ENCODE measurements at regions of chr22 and their contacts with region 1.

Region 1: GRCh38 chr22:39554151-39554550 is 16.4 kb upstream of the CACNA1I start:
- DNase-seq: no peak

Region 2: GRCh38 chr22:39532215-39533071 is 21.7 kb before region 1 on chr22 and contains the start of gene RPS19BP1:
- intact Hi-C with region 1: no loop called
- DNase-seq: peak; percentile 99
- total RNA-seq, gene RPS19BP1: 49.9 to 54.4 TPM

Region 3: DNA sequence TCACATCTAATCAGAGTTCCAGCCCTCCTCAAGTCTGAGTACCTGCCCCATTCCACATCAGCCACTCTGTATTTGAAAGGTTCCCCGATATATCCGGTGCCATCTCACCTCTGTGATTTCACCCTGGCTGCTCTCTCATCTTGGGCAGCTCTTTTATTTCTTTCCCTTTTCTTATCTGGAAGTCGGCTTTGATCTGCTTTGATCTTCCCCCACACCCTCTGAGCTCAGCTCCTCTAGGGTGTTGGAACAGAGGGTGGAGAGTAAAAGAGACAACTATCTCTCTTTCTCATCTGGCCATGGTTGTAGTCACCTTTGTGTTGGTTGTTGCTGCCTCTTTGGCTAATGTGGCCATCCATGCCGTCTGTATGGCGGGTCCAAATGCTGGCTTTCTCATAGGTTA is 231.1 kb after region 1 on chr22:
- intact Hi-C with region 1: no loop called
- DNase-seq: no peak

Region 4: GRCh38 chr22:40009292-40009769 is 455.2 kb after region 1 on chr22:
- intact Hi-C with region 1: loop called in 1 of 2 experiments (anchors 5 kb)
- DNase-seq: no peak

Region 5: GRCh38 chr22:40289991-40290459 is 735.9 kb after region 1 on chr22:
- intact Hi-C with region 1: loop called in 1 of 2 experiments (anchors 5 kb)
- DNase-seq: no peak

Measured in posterior vena cava (tissue), 2 donors.